Activated CD4-positive, alpha-beta memory T cell treated with anti-CD3 and anti-CD28 coated beads for 36 hours (primary cell): ENCODE measurements at regions of chr14 and their contacts with region 1.

Region 1: DNA sequence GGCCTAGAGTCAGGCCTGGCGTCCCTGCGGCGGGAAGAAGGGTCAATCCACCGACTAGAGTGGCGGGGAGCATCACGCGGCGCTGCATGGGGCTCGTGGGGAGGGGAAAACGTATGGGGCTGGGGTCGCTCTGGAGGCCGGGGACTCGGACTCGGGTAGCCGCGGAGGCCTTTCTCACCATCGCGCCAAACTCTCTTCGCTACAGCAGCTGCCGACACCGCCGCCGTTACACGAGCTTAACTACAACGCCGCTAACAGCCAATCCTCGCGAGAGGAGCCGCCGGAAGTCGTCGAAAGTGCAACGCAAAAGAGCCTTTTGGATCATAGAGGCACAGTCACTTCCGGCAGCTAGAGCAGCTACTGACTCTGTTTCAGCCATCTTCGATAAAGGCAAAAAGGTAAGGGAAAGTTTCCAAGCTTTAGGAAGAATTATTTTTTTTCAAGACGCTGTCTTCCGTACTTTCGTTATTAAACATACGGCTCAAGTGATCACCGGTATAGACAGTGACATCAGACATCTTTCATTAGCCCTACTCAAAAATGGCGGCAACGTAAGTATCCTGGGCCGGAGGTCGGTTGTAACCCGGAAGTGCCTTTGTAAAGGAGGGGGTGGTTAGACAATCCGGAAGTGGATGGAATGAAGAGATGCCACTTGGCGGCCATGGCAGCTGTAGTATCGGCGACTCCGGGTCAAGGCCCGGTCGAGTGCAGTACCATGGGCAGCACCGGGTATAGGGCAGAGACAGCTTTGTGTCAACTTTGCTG is at the starts of genes ERH and SLC39A9:
- DNase-seq: peak; percentile 96
- H3K4me3 Mint-ChIP-seq: peak within 1 kb of the TSS; percentile 97
- H3K27ac Mint-ChIP-seq: peak within 1 kb of the TSS; percentile 100
- H3K4me1 Mint-ChIP-seq: peaks cover 67% of the 10 kb centered on the region
- H3K27me3 Mint-ChIP-seq: no peaks in the 10 kb centered on the region
- total RNA-seq, gene ERH: 327 to 330 TPM
- total RNA-seq, gene SLC39A9: 39.3 to 40.3 TPM

Region 2: DNA sequence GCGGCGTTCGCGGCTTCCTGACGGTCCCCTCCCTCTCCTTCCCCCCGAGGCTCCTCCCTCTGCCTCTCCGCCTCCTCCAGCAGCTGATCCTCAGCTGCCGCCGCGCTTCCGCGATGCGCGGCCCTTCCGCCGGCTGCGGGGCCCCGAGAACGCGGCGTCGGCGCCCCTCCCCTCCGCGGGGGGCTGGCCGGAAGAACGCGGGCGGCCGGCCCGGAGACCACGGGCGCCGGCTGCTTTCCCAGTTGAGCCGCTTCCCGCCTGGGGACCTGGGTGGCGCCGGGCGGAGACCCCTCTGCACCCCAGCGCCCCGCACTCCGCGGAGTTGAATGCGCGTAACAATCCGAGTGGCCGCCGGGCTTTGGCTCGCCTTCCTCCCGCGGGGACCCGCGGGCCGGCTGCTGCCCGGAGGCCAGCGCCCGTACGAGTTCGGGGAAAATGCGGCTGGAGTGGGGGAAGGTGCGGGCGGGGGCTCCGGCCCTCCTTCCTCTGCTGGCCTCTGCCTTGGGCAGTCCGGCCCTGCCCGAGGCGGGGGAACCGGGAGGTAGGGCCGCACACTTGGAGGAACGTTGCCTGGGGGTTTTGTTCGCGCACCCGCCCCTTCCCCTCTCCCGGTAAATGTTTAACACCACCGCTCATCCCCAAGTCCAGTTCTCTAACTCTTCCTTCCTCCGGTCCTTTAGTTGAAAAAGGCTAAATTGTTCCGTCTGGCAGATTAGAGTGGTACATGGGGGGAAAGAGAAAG is 244.9 kb before region 1 on chr14:
- CTCF ChIA-PET with region 1: no interaction called
- POLR2A ChIA-PET with region 1: interaction called, 5 read pairs
- intact Hi-C with region 1: loop called (anchors 1 kb)
- DNase-seq: peak; percentile 96
- H3K4me3 Mint-ChIP-seq: peak overlapping the region; percentile 91
- H3K27ac Mint-ChIP-seq: peak overlapping the region; percentile 92
- H3K4me1 Mint-ChIP-seq: peaks cover 33% of the 10 kb centered on the region
- H3K27me3 Mint-ChIP-seq: no peaks in the 10 kb centered on the region

Region 3: GRCh38 chr14:69191340-69192111 is 206.7 kb before region 1 on chr14 and contains the start of gene EXD2:
- CTCF ChIA-PET with region 1: no interaction called
- POLR2A ChIA-PET with region 1: interaction called, 12 read pairs
- intact Hi-C with region 1: no loop called
- DNase-seq: peak; percentile 88
- H3K4me3 Mint-ChIP-seq: peak within 1 kb of the TSS; percentile 85
- H3K27ac Mint-ChIP-seq: peak within 1 kb of the TSS; percentile 78
- H3K4me1 Mint-ChIP-seq: peaks cover 12% of the 10 kb centered on the region
- H3K27me3 Mint-ChIP-seq: no peaks in the 10 kb centered on the region
- total RNA-seq, gene EXD2: 10.5 to 11.5 TPM

Region 4: GRCh38 chr14:69288011-69288771 is 110.0 kb before region 1 on chr14:
- CTCF ChIA-PET with region 1: no interaction called
- POLR2A ChIA-PET with region 1: no interaction called
- intact Hi-C with region 1: no loop called
- DNase-seq: no peak
- H3K4me3 Mint-ChIP-seq: no peak overlapping the region
- H3K27ac Mint-ChIP-seq: no peak overlapping the region
- H3K4me1 Mint-ChIP-seq: no peaks in the 10 kb centered on the region
- H3K27me3 Mint-ChIP-seq: peaks cover 5% of the 10 kb centered on the region

Region 5: GRCh38 chr14:69358233-69358963 is 39.8 kb before region 1 on chr14:
- CTCF ChIA-PET with region 1: interaction called, 3 read pairs
- POLR2A ChIA-PET with region 1: interaction called, 7 read pairs
- intact Hi-C with region 1: loop called (anchors 1 kb)
- DNase-seq: peak; percentile 84
- H3K4me3 Mint-ChIP-seq: no peak overlapping the region
- H3K27ac Mint-ChIP-seq: peak overlapping the region; percentile 33
- H3K4me1 Mint-ChIP-seq: peaks cover 45% of the 10 kb centered on the region
- H3K27me3 Mint-ChIP-seq: peaks cover 1% of the 10 kb centered on the region

Region 6: GRCh38 chr14:69460093-69460701 is 62.0 kb after region 1 on chr14:
- CTCF ChIA-PET with region 1: interaction called, 11 read pairs
- POLR2A ChIA-PET with region 1: interaction called, 3 read pairs
- intact Hi-C with region 1: loop called (anchors 2 kb)
- DNase-seq: peak; percentile 77
- H3K4me3 Mint-ChIP-seq: no peak overlapping the region
- H3K27ac Mint-ChIP-seq: no peak overlapping the region
- H3K4me1 Mint-ChIP-seq: no peaks in the 10 kb centered on the region
- H3K27me3 Mint-ChIP-seq: no peaks in the 10 kb centered on the region

Region 7: GRCh38 chr14:69766984-69767368 is 368.7 kb after region 1 on chr14 and contains the start of gene SRSF5:
- CTCF ChIA-PET with region 1: no interaction called
- POLR2A ChIA-PET with region 1: no interaction called
- intact Hi-C with region 1: loop called (anchors 1 kb)
- DNase-seq: peak; percentile 96
- H3K4me3 Mint-ChIP-seq: peak within 1 kb of the TSS; percentile 99
- H3K27ac Mint-ChIP-seq: peak within 1 kb of the TSS; percentile 99
- H3K4me1 Mint-ChIP-seq: peaks cover 73% of the 10 kb centered on the region
- H3K27me3 Mint-ChIP-seq: no peaks in the 10 kb centered on the region
- total RNA-seq, gene SRSF5: 289 to 303 TPM